Caco-2 (cell line): ENCODE measurements at regions of chr3 and their contacts with region 1.

Region 1: GRCh38 chr3:194682694-194683310 is 2.9 kb upstream of the FAM43A start:
- DNase-seq: peak; percentile 83 to 84
- H3K4me3 ChIP-seq: no peak overlapping the region
- H3K4me3 Mint-ChIP-seq: no peak overlapping the region
- H3K27ac Mint-ChIP-seq: no peak overlapping the region
- H3K4me1 ChIP-seq: peaks cover 10% of the 10 kb centered on the region; the same call in 1 of the 2 replicates
- H3K4me1 Mint-ChIP-seq: peaks cover 7% of the 10 kb centered on the region
- H3K27me3 ChIP-seq: no peaks in the 10 kb centered on the region
- H3K27me3 Mint-ChIP-seq: no peaks in the 10 kb centered on the region
- CTCF ChIP-seq: peak; percentile 82 to 83

Region 2: GRCh38 chr3:194671900-194672808 is 10.6 kb before region 1 on chr3 and contains the start of gene LSG1:
- CTCF ChIA-PET with region 1: interaction called, 32 read pairs
- POLR2A ChIA-PET with region 1: interaction called, 7 read pairs
- intact Hi-C with region 1: no loop called
- DNase-seq: peak; percentile 91 to 92
- H3K4me3 ChIP-seq: peak within 1 kb of the TSS; percentile 88
- H3K4me3 Mint-ChIP-seq: peak within 1 kb of the TSS; percentile 83
- H3K27ac Mint-ChIP-seq: peak within 1 kb of the TSS; percentile 97
- H3K4me1 ChIP-seq: peaks cover 9% of the 10 kb centered on the region
- H3K4me1 Mint-ChIP-seq: peaks cover 5% of the 10 kb centered on the region
- H3K27me3 ChIP-seq: no peaks in the 10 kb centered on the region
- H3K27me3 Mint-ChIP-seq: no peaks in the 10 kb centered on the region
- CTCF ChIP-seq: peak in 1 of 2 experiments; percentile 9
- total RNA-seq, gene LSG1: 48.0 and 55.0 TPM in 2 replicates

Region 3: GRCh38 chr3:194769020-194769643 is 86.3 kb after region 1 on chr3:
- CTCF ChIA-PET with region 1: interaction called, 18 read pairs
- POLR2A ChIA-PET with region 1: interaction called, 5 read pairs
- intact Hi-C with region 1: loop called (anchors 1 kb)
- DNase-seq: peak; percentile 92 to 97
- H3K4me3 ChIP-seq: peak overlapping the region; percentile 37
- H3K4me3 Mint-ChIP-seq: peak overlapping the region; percentile 77
- H3K27ac Mint-ChIP-seq: peak overlapping the region; percentile 75
- H3K4me1 ChIP-seq: 0 out of 2 replicates have a peak, but pooled peaks cover 6% of the 10 kb centered on the region
- H3K4me1 Mint-ChIP-seq: peaks cover 11% of the 10 kb centered on the region
- H3K27me3 ChIP-seq: no peaks in the 10 kb centered on the region
- H3K27me3 Mint-ChIP-seq: no peaks in the 10 kb centered on the region
- CTCF ChIP-seq: peak in 1 of 2 experiments; percentile 18

Region 4: GRCh38 chr3:194952841-194953241 is 270.0 kb after region 1 on chr3:
- CTCF ChIA-PET with region 1: interaction called, 20 read pairs
- POLR2A ChIA-PET with region 1: interaction called, 6 read pairs
- intact Hi-C with region 1: loop called (anchors 1 kb)
- DNase-seq: peak; percentile 47 to 68
- H3K4me3 ChIP-seq: no peak overlapping the region
- H3K4me3 Mint-ChIP-seq: no peak overlapping the region
- H3K27ac Mint-ChIP-seq: peak overlapping the region; percentile 3
- H3K4me1 ChIP-seq: peaks cover 21% of the 10 kb centered on the region
- H3K4me1 Mint-ChIP-seq: peaks cover 11% of the 10 kb centered on the region
- H3K27me3 ChIP-seq: no peaks in the 10 kb centered on the region
- H3K27me3 Mint-ChIP-seq: no peaks in the 10 kb centered on the region
- CTCF ChIP-seq: no peak

Region 5: GRCh38 chr3:195106418-195106906 is 423.7 kb after region 1 on chr3:
- CTCF ChIA-PET with region 1: interaction called, 9 read pairs
- POLR2A ChIA-PET with region 1: no interaction called
- intact Hi-C with region 1: loop called (anchors 1 kb)
- DNase-seq: peak in 1 of 2 experiments; percentile 66
- H3K4me3 ChIP-seq: no peak overlapping the region
- H3K4me3 Mint-ChIP-seq: peak overlapping the region; percentile 60
- H3K27ac Mint-ChIP-seq: peak overlapping the region; percentile 49
- H3K4me1 ChIP-seq: peaks cover 36% of the 10 kb centered on the region
- H3K4me1 Mint-ChIP-seq: peaks cover 33% of the 10 kb centered on the region
- H3K27me3 ChIP-seq: no peaks in the 10 kb centered on the region
- H3K27me3 Mint-ChIP-seq: no peaks in the 10 kb centered on the region
- CTCF ChIP-seq: peak; percentile 72 to 88

Region 6: GRCh38 chr3:195271116-195271858 is 588.5 kb after region 1 on chr3 and contains the start of gene XXYLT1:
- CTCF ChIA-PET with region 1: interaction called, 19 read pairs
- POLR2A ChIA-PET with region 1: no interaction called
- intact Hi-C with region 1: no loop called
- DNase-seq: peak; percentile 92 to 94
- H3K4me3 ChIP-seq: peak within 1 kb of the TSS; percentile 91
- H3K4me3 Mint-ChIP-seq: peak within 1 kb of the TSS; percentile 88
- H3K27ac Mint-ChIP-seq: peak within 1 kb of the TSS; percentile 80
- H3K4me1 ChIP-seq: peaks cover 36% of the 10 kb centered on the region
- H3K4me1 Mint-ChIP-seq: peaks cover 21% of the 10 kb centered on the region
- H3K27me3 ChIP-seq: no peaks in the 10 kb centered on the region
- H3K27me3 Mint-ChIP-seq: no peaks in the 10 kb centered on the region
- CTCF ChIP-seq: peak; percentile 87 to 96
- total RNA-seq, gene XXYLT1: 12.2 and 14.2 TPM in 2 replicates